K562 (cell line): ENCODE measurements at regions of chr5 and their contacts with region 1.

Region 1: GRCh38 chr5:113029614-113030013 is 53.0 kb downstream of the DCP2 start:
- DNase-seq: no peak
- ATAC-seq: peak; percentile 9
- H3K4me3 ChIP-seq: no peak overlapping the region
- H3K27ac ChIP-seq: no peak overlapping the region
- H3K4me1 ChIP-seq: peaks cover 0 to 2% of the 10 kb centered on the region in 2 experiments; a peak in 2 of 5 replicates
- H3K27me3 ChIP-seq: no peaks in the 10 kb centered on the region
- CTCF ChIP-seq: no peak
- EP300 ChIP-seq: no peak
- POLR2A ChIP-seq: no peak
- RAD21 ChIP-seq: no peak

Region 2: GRCh38 chr5:113043491-113043931 is 13.9 kb after region 1 on chr5:
- CTCF ChIA-PET with region 1: no interaction called
- POLR2A ChIA-PET with region 1: interaction called, 10 read pairs
- in situ Hi-C with region 1: no loop called
- intact Hi-C with region 1: no loop called
- DNase-seq: peak in 3 of 4 experiments; percentile 23 to 51 (median 50)
- ATAC-seq: peak; percentile 49
- H3K4me3 ChIP-seq: no peak overlapping the region
- H3K27ac ChIP-seq: peak overlapping the region; percentile 92
- H3K4me1 ChIP-seq: peaks cover 37 to 49% of the 10 kb centered on the region in 2 experiments
- H3K27me3 ChIP-seq: no peaks in the 10 kb centered on the region
- CTCF ChIP-seq: peak in 2 of 3 experiments; percentile 17 to 19; a peak in 3 of 6 replicates
- EP300 ChIP-seq: no peak
- POLR2A ChIP-seq: no peak
- RAD21 ChIP-seq: peak in 1 of 2 experiments; percentile 38; a peak in 2 of 4 replicates

Region 3: GRCh38 chr5:113278976-113279375 is 249.4 kb after region 1 on chr5:
- CTCF ChIA-PET with region 1: no interaction called
- POLR2A ChIA-PET with region 1: no interaction called
- in situ Hi-C with region 1: no loop called
- intact Hi-C with region 1: no loop called
- DNase-seq: no peak
- ATAC-seq: no peak
- H3K4me3 ChIP-seq: no peak overlapping the region
- H3K27ac ChIP-seq: no peak overlapping the region
- H3K4me1 ChIP-seq: no peaks in the 10 kb centered on the region; a peak in 1 of 5 replicates
- H3K27me3 ChIP-seq: peaks cover 0 to 5% of the 10 kb centered on the region in 2 experiments; a peak in 3 of 5 replicates
- CTCF ChIP-seq: no peak
- EP300 ChIP-seq: no peak
- POLR2A ChIP-seq: no peak
- RAD21 ChIP-seq: no peak